GM10248 (cell line): ENCODE measurements at regions of chr6 and their contacts with region 1.

Region 1: GRCh38 chr6:49606696-49607390 is 29.8 kb downstream of the RHAG start:
- DNase-seq: peak; percentile 60
- CTCF ChIP-seq: peak; percentile 83

Region 2: DNA sequence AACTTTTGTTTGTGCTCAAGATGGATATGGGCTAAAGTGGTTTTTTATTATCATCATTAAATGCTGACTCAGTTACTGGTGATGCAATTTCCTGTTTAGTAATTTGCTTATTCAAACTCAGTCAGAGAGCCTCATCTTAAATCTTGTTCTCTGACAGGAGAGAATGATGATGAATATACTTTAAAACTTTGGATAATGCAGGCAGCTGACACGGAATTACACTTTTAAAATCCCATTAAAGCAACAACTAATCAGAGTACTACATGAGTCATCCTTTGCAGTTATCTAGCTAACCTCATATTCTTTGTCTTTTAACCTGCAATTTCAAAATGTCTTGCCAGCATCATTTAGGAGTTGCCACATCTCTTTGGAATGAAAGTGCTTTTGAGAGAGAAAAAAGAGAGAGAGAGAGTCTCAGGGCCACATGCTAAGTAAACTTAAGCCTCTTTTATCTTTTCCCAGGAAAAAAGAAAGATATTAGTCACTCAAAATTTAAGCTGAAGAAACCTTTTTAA is 65.6 kb before region 1 on chr6:
- CTCF ChIA-PET with region 1: interaction called, 15 read pairs
- POLR2A ChIA-PET with region 1: no interaction called
- DNase-seq: no peak
- CTCF ChIP-seq: no peak

Region 3: GRCh38 chr6:49625140-49625539 is 18.3 kb after region 1 on chr6:
- CTCF ChIA-PET with region 1: interaction called, 29 read pairs
- POLR2A ChIA-PET with region 1: no interaction called
- DNase-seq: no peak
- CTCF ChIP-seq: no peak

Region 4: DNA sequence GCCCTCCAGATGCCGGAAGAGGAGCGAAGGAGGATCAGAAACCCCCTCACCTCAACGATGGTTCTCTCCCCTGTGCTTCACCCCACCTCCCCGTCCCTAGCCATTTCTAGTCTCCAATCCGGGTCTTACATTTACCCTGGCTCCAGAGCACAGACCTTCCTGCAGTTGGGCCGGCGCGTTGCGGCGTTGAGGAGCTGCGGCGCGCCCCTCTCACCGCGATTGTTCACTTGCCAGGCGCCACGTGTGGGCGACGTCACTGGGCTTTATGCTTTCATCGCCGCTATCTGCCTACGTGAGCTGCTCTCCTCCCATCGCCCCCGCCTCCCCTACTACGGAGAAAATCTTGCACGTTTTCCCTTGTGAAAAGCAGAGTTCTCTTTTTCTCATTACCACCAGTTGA is 106.5 kb after region 1 on chr6 and contains the start of gene CRISP2:
- CTCF ChIA-PET with region 1: no interaction called
- POLR2A ChIA-PET with region 1: no interaction called
- DNase-seq: no peak
- CTCF ChIP-seq: no peak